Naive thymus-derived CD4-positive, alpha-beta T cell (primary cell): ENCODE measurements at regions of chr9 and their contacts with region 1.

Region 1: GRCh38 chr9:96418074-96418809 is at the start of gene ZNF367:
- DNase-seq: peak; percentile 75 to 94 (median 82)
- ATAC-seq: peak; percentile 85
- H3K4me3 ChIP-seq: peak within 1 kb of the TSS; percentile 94
- H3K4me3 Mint-ChIP-seq: peak within 1 kb of the TSS; percentile 88 to 98 (median 92)
- H3K27ac ChIP-seq: peak within 1 kb of the TSS; percentile 98
- H3K27ac Mint-ChIP-seq: peak within 1 kb of the TSS; percentile 92 to 98 (median 96)
- H3K4me1 ChIP-seq: peaks cover 19 to 31% of the 10 kb centered on the region in 2 donors
- H3K4me1 Mint-ChIP-seq: peaks cover 21 to 39% (median 31%) of the 10 kb centered on the region in 7 donors
- H3K27me3 ChIP-seq: no peaks in the 10 kb centered on the region
- H3K27me3 Mint-ChIP-seq: no peaks in the 10 kb centered on the region
- total RNA-seq, gene ZNF367: 3.8 to 22.9 (median 5.5) TPM

Region 2: DNA sequence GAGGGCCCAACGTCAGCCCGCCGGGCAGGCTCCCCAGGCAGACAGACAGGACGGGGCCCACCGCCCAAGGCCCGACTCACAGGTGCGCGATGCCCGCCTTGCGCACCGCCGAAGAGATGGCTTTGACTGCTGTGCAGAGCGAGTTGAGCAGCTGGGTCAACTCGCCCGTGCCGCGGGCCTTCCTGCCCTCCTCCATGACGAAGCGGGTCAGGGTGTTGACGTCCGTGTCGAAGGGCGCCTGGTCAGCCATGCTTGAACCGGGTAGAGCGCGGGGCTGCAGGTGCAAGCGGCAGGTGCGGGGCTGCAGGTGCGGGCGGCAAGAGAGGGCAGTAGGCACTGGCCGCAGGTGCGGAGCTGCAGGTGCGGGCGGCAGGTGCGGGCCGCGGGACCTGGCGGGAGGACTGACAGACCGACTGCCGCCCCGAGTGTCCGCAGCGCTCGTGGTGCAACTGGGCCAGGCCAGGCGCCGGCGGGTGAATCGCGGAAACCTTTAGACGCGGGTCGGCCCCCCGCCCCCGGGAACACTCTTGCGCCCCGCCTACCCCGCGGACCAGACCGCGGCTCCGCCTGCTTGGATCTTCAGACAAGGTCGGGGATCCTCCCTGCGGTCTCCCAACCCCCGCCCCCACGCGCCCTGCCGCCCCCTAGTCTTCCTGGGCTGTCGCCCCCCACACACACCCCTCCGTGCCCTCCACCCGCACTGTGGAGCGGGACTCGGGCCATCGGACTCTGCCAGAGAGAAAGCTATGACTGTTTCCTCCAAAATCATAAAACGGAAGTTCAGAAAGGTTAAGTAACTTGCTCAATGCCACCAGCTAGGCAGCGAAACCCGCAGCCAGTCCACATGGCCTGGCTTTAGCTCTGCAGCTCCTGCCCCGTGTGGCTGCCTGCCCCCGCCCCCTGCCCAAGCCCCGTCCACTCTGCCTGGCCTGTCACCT is 1778.9 kb before region 1 on chr9 and contains the start of gene FBP1:
- CTCF ChIA-PET with region 1: no interaction called
- POLR2A ChIA-PET with region 1: no interaction called
- intact Hi-C with region 1: no loop called
- DNase-seq: peak; percentile 20 to 50 (median 39)
- ATAC-seq: peak; percentile 75
- H3K4me3 ChIP-seq: peak within 1 kb of the TSS; percentile 69
- H3K4me3 Mint-ChIP-seq: peak within 1 kb of the TSS; percentile 87 to 98 (median 96)
- H3K27ac ChIP-seq: peak within 1 kb of the TSS; percentile 59
- H3K27ac Mint-ChIP-seq: peak within 1 kb of the TSS; percentile 66 to 95 (median 92)
- H3K4me1 ChIP-seq: no peaks in the 10 kb centered on the region
- H3K4me1 Mint-ChIP-seq: peaks cover 13 to 23% (median 17%) of the 10 kb centered on the region in 7 donors
- H3K27me3 ChIP-seq: no peaks in the 10 kb centered on the region
- H3K27me3 Mint-ChIP-seq: peaks cover 0 to 42% (median 0%) of the 10 kb centered on the region in 5 donors
- total RNA-seq, gene FBP1: 0.15 to 26.1 (median 10.5) TPM

Region 3: DNA sequence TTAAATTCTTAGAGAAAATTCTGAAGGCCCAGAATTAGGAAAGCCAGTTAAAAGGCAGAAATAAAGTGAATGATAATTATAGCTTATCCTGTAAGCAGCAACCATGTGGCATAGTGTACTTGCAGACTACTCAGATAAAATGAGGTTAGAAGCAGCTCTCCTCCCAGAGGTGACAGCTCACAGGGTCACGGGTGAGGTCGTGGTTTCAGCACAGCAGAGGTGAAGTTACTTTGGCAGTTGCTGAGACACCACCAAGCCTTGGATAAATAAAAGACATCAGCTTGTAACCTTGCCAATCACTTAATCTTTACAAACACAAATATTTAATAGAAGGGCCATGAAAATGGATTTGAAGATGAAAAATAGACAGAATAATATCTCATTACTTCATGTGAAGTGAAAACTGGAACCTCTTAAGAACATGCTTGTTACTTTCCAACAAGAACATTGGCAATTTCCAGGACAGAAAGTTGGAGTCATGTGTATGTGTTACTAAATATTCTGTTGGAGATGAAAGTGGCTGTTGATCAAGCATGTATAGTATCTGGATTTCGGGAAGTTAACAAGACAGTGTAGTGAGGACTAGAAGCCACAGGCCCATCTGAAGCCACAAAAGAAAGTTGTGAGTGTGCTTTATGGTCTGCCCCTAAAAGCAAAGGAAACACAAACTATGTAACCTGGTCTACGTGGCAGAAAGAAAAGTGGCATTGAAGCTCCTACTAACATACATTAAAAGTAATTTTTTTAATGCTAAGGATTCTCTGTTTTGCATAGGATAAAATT is 408.4 kb before region 1 on chr9:
- CTCF ChIA-PET with region 1: no interaction called
- POLR2A ChIA-PET with region 1: no interaction called
- intact Hi-C with region 1: loop called in 1 of 2 experiments (anchors 10 kb)
- DNase-seq: peak in 5 of 9 donors; percentile 44 to 68 (median 62)
- ATAC-seq: peak; percentile 83
- H3K4me3 ChIP-seq: no peak overlapping the region
- H3K4me3 Mint-ChIP-seq: peak overlapping the region; percentile 25 to 75 (median 56)
- H3K27ac ChIP-seq: peak overlapping the region; percentile 68
- H3K27ac Mint-ChIP-seq: peak overlapping the region in 8 of 9 donors; percentile 65 to 98 (median 92)
- H3K4me1 ChIP-seq: peaks cover 43 to 57% of the 10 kb centered on the region in 2 donors
- H3K4me1 Mint-ChIP-seq: peaks cover 0 to 55% (median 24%) of the 10 kb centered on the region in 7 donors
- H3K27me3 ChIP-seq: no peaks in the 10 kb centered on the region
- H3K27me3 Mint-ChIP-seq: no peaks in the 10 kb centered on the region

Region 4: GRCh38 chr9:96367943-96368342 is 50.3 kb before region 1 on chr9:
- CTCF ChIA-PET with region 1: no interaction called
- POLR2A ChIA-PET with region 1: no interaction called
- intact Hi-C with region 1: no loop called
- DNase-seq: no peak
- ATAC-seq: no peak
- H3K4me3 ChIP-seq: no peak overlapping the region
- H3K4me3 Mint-ChIP-seq: no peak overlapping the region
- H3K27ac ChIP-seq: no peak overlapping the region
- H3K27ac Mint-ChIP-seq: no peak overlapping the region
- H3K4me1 ChIP-seq: no peaks in the 10 kb centered on the region
- H3K4me1 Mint-ChIP-seq: peaks cover 0 to 2% (median 0%) of the 10 kb centered on the region in 7 donors
- H3K27me3 ChIP-seq: no peaks in the 10 kb centered on the region
- H3K27me3 Mint-ChIP-seq: no peaks in the 10 kb centered on the region

Region 5: DNA sequence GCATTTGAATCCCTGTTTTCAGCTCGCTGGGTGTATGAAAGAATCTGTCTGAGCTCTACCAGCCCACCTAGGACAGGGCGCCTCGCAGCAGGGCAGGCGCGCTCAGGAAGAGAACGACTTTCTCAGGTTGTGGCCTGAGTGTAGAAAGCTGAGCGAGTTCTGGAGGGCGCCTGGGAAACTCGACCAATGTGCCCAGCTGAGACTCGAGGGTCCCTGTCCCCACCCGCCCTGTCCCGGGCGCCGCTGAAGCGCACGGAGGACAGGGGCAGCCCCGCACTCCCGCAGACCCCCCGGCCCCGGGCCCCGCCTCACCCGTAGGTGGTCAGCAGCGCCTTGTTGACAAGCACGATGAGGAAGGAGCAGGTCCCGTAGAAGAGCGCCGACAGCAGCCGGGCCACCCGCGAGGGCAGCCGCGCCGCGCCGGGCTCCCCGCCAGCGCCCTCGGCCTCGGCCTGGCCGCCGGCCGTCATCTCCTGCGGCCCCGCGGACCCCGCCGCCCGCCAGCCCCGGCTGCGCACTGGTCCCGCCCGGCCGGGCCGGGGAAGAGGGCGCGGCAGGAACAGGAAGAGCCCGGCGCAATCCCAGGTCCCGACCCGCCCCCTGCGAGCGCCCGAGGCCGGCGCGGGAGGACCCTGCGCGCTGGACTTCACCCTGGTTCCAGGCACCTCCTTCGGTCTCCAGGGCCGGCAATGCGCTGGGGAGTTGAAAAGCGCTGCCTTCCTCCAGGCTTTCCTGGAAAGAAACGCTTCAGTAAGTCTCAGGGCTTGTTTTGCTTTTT is 34.9 kb before region 1 on chr9 and contains the start of gene SLC35D2:
- CTCF ChIA-PET with region 1: interaction called, 3 read pairs
- POLR2A ChIA-PET with region 1: interaction called, 4 read pairs
- intact Hi-C with region 1: loop called (anchors 1 kb)
- DNase-seq: peak in 5 of 9 donors; percentile 7 to 32 (median 14)
- ATAC-seq: peak; percentile 69
- H3K4me3 ChIP-seq: peak within 1 kb of the TSS; percentile 58
- H3K4me3 Mint-ChIP-seq: peak within 1 kb of the TSS; percentile 82 to 89 (median 86)
- H3K27ac ChIP-seq: peak within 1 kb of the TSS; percentile 56
- H3K27ac Mint-ChIP-seq: peak within 1 kb of the TSS; percentile 43 to 86 (median 76)
- H3K4me1 ChIP-seq: peaks cover 0 to 9% of the 10 kb centered on the region in 2 donors
- H3K4me1 Mint-ChIP-seq: peaks cover 10 to 42% (median 27%) of the 10 kb centered on the region in 7 donors
- H3K27me3 ChIP-seq: no peaks in the 10 kb centered on the region
- H3K27me3 Mint-ChIP-seq: no peaks in the 10 kb centered on the region
- total RNA-seq, gene SLC35D2: 9.7 to 20.2 (median 19.1) TPM

Region 6: GRCh38 chr9:96449845-96450612 is 31.8 kb after region 1 on chr9 and contains the start of gene HABP4:
- CTCF ChIA-PET with region 1: interaction called, 8 read pairs
- POLR2A ChIA-PET with region 1: interaction called, 33 read pairs
- intact Hi-C with region 1: loop called (anchors 1 kb)
- DNase-seq: peak; percentile 90 to 97 (median 95)
- ATAC-seq: peak; percentile 98
- H3K4me3 ChIP-seq: peak within 1 kb of the TSS; percentile 77
- H3K4me3 Mint-ChIP-seq: peak within 1 kb of the TSS; percentile 88 to 99 (median 93)
- H3K27ac ChIP-seq: peak within 1 kb of the TSS; percentile 74
- H3K27ac Mint-ChIP-seq: peak within 1 kb of the TSS; percentile 74 to 98 (median 94)
- H3K4me1 ChIP-seq: peaks cover 5 to 14% of the 10 kb centered on the region in 2 donors
- H3K4me1 Mint-ChIP-seq: peaks cover 19 to 33% (median 26%) of the 10 kb centered on the region in 7 donors
- H3K27me3 ChIP-seq: no peaks in the 10 kb centered on the region
- H3K27me3 Mint-ChIP-seq: peaks cover 0 to 41% (median 6%) of the 10 kb centered on the region in 5 donors
- total RNA-seq, gene HABP4: 6.6 to 40.3 (median 23.9) TPM

Region 7: DNA sequence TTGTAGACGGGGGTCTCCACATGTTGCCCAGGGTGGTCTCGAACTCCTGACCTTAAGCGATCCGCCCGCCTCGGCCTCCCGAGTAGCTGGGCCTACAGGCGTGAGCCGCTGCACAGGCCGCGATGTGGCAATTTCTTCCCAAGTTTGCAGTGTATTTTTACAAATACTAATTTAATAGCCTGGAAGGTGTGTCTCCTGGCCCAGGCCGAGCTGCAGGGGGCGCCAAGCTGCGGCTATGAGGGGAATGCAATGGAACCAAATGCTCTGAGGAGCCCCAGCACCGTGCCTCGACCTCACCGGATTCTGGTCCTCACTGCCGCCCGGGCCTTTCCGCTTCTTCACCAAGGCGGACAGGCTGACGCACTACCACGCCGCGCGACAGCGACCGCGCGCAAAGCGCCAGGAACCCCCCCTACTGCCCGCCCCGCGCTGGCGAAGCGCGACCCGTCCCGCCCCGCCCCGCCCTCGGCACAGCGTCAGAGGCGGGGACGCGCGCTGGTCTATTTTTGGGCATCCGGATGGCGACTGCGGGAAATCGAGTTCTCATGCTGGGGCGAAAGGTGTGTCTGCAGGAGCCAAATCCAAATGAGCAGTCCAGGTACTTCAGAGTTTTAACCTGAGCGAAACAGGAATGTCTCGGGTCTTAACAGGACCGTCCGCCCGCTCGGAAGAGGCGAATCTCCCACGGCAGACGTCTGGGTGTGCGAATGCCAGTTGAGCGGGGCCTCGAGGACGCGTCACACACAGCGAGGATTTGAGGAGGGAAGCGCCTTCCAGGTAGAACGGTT is 268.5 kb after region 1 on chr9:
- CTCF ChIA-PET with region 1: no interaction called
- POLR2A ChIA-PET with region 1: no interaction called
- intact Hi-C with region 1: loop called in 1 of 2 experiments (anchors 1 kb)
- DNase-seq: peak; percentile 54 to 81 (median 78)
- ATAC-seq: peak; percentile 96
- H3K4me3 ChIP-seq: peak overlapping the region; percentile 69
- H3K4me3 Mint-ChIP-seq: peak overlapping the region; percentile 73 to 95 (median 87)
- H3K27ac ChIP-seq: peak overlapping the region; percentile 67
- H3K27ac Mint-ChIP-seq: peak overlapping the region in 6 of 9 donors; percentile 42 to 81 (median 66)
- H3K4me1 ChIP-seq: no peaks in the 10 kb centered on the region
- H3K4me1 Mint-ChIP-seq: peaks cover 0 to 16% (median 7%) of the 10 kb centered on the region in 7 donors
- H3K27me3 ChIP-seq: no peaks in the 10 kb centered on the region
- H3K27me3 Mint-ChIP-seq: peaks cover 0 to 7% (median 6%) of the 10 kb centered on the region in 5 donors

Region 8: GRCh38 chr9:97075289-97075985 is 657.2 kb after region 1 on chr9:
- CTCF ChIA-PET with region 1: no interaction called
- POLR2A ChIA-PET with region 1: no interaction called
- intact Hi-C with region 1: no loop called
- DNase-seq: no peak
- ATAC-seq: no peak
- H3K4me3 ChIP-seq: no peak overlapping the region
- H3K4me3 Mint-ChIP-seq: no peak overlapping the region
- H3K27ac ChIP-seq: no peak overlapping the region
- H3K27ac Mint-ChIP-seq: no peak overlapping the region
- H3K4me1 ChIP-seq: no peaks in the 10 kb centered on the region
- H3K4me1 Mint-ChIP-seq: peaks cover 0 to 4% (median 0%) of the 10 kb centered on the region in 7 donors
- H3K27me3 ChIP-seq: peaks cover 0 to 3% of the 10 kb centered on the region in 2 donors
- H3K27me3 Mint-ChIP-seq: peaks cover 38 to 64% (median 52%) of the 10 kb centered on the region in 5 donors

Region 9: DNA sequence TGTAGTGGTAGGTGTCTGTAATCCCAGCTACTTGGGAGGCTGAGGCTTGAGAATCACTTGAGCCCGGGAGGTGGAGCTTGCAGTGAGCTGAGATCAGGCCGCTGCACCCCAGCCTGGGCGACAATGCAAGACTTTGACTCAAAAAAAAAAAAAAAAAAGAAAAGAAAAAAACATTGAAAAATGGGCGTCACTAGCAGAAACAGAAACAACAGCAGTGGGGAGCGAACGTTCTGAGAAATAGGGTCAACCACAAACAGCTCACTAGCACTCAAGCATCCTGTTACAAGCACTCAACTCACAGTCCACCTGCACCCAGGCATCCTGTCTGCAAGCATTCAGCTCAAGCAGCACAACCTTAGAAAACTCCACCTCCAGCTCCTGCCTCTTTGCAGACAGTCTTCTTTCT is 1683.6 kb after region 1 on chr9:
- CTCF ChIA-PET with region 1: no interaction called
- POLR2A ChIA-PET with region 1: no interaction called
- intact Hi-C with region 1: loop called in 1 of 2 experiments (anchors 5 kb)
- DNase-seq: peak; percentile 35 to 96 (median 92)
- ATAC-seq: peak; percentile 99
- H3K4me3 ChIP-seq: peak overlapping the region; percentile 31
- H3K4me3 Mint-ChIP-seq: peak overlapping the region; percentile 66 to 86 (median 77)
- H3K27ac ChIP-seq: peak overlapping the region; percentile 78
- H3K27ac Mint-ChIP-seq: peak overlapping the region; percentile 87 to 99 (median 95)
- H3K4me1 ChIP-seq: peaks cover 88 to 91% of the 10 kb centered on the region in 2 donors
- H3K4me1 Mint-ChIP-seq: peaks cover 52 to 97% (median 88%) of the 10 kb centered on the region in 7 donors
- H3K27me3 ChIP-seq: no peaks in the 10 kb centered on the region
- H3K27me3 Mint-ChIP-seq: no peaks in the 10 kb centered on the region